ENCODE measurements at regions of chr17 and their contacts with region 1.

Region 1: DNA sequence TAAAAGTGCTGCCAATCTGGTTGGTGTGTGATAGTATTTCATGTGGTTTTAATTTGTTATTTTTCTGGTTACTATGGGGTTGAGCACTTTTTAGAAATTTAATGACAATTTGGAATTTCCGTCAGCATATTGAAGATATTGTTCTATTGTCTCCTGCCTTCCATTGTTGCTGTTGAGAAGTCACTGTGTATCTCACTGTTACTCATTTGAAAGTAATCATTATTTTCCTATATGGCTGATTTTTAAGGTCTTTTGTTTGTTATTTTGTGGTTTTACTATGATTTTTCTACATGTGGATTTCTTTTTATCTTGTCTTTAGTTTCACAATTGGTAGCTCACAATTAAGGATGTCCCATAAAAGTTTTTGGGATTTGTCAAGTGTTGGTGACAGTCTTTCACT is 8.2 kb downstream of the KRT26 start:
- DNase-seq: no peak
- ATAC-seq: no peak
- H3K4me3 ChIP-seq: no peak overlapping the region
- H3K27ac ChIP-seq: no peak overlapping the region
- H3K4me1 ChIP-seq: no peaks in the 10 kb centered on the region
- H3K27me3 ChIP-seq: peaks cover 0 to 12% (median 0%) of the 10 kb centered on the region in 7 donors
- CTCF ChIP-seq: no peak

Region 2: DNA sequence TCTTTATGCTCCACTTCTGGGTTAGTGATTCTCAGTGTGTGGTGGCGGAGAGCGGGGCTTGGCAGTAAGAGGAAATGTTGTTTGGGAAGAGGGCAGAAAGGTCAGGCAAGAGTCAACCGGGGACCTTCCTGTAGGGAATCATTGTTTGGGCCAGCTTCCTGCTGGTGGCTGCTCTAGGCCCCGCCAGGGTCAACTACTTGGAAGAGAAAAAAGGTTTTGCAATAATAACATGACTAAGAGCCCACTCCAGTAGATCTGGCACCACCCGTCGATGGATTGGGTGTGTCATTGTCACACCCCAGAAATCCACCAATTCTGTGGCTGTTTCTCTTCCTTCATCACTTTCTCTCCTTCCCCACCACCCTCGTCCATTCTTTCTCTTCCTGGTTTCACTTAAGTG is 56.0 kb before region 1 on chr17:
- intact Hi-C with region 1: no loop called
- DNase-seq: peak; percentile 18 to 23
- ATAC-seq: peak in 7 of 8 donors; percentile 51 to 93 (median 62)
- H3K4me3 ChIP-seq: no peak overlapping the region
- H3K27ac ChIP-seq: peak overlapping the region in 4 of 10 donors; percentile 2 to 44 (median 37)
- H3K4me1 ChIP-seq: peaks cover 0 to 13% (median 0%) of the 10 kb centered on the region in 9 donors
- H3K27me3 ChIP-seq: peaks cover 0 to 22% (median 3%) of the 10 kb centered on the region in 7 donors
- CTCF ChIP-seq: no peak

Region 3: GRCh38 chr17:40819528-40820125 is 55.9 kb after region 1 on chr17:
- intact Hi-C with region 1: loop called in 1 of 10 experiments (anchors 10 kb)
- DNase-seq: peak in 1 of 2 donors; percentile 51
- ATAC-seq: peak; percentile 38 to 90 (median 80)
- H3K4me3 ChIP-seq: peak overlapping the region; percentile 39 to 79 (median 69)
- H3K27ac ChIP-seq: peak overlapping the region; percentile 90 to 98 (median 94)
- H3K4me1 ChIP-seq: peaks cover 0 to 37% (median 24%) of the 10 kb centered on the region in 9 donors
- H3K27me3 ChIP-seq: no peaks in the 10 kb centered on the region
- CTCF ChIP-seq: no peak

Region 4: GRCh38 chr17:40854159-40854814 is 90.5 kb after region 1 on chr17:
- intact Hi-C with region 1: no loop called
- DNase-seq: no peak
- ATAC-seq: peak in 1 of 8 donors; percentile 62
- H3K4me3 ChIP-seq: no peak overlapping the region
- H3K27ac ChIP-seq: no peak overlapping the region
- H3K4me1 ChIP-seq: peaks cover 0 to 14% (median 0%) of the 10 kb centered on the region in 9 donors
- H3K27me3 ChIP-seq: peaks cover 0 to 16% (median 0%) of the 10 kb centered on the region in 7 donors
- CTCF ChIP-seq: no peak